Ascending aorta (tissue), 2 donors: ENCODE measurements at regions of chr12 and their contacts with region 1.

Region 1: GRCh38 chr12:12327802-12328201 is 22.2 kb downstream of the MANSC1 start:
- DNase-seq: no peak
- H3K4me3 ChIP-seq: no peak overlapping the region
- H3K27ac ChIP-seq: peak overlapping the region in 1 of 2 donors; percentile 44
- H3K4me1 ChIP-seq: peaks cover 0 to 4% of the 10 kb centered on the region in 2 donors
- H3K27me3 ChIP-seq: no peaks in the 10 kb centered on the region
- CTCF ChIP-seq: peak; percentile 46 to 73 (median 64)

Region 2: GRCh38 chr12:12081836-12082497 is 245.8 kb before region 1 on chr12:
- intact Hi-C with region 1: loop called (anchors 1 kb)
- DNase-seq: no peak
- H3K4me3 ChIP-seq: no peak overlapping the region
- H3K27ac ChIP-seq: peak overlapping the region; percentile 64 to 74
- H3K4me1 ChIP-seq: no peaks in the 10 kb centered on the region
- H3K27me3 ChIP-seq: no peaks in the 10 kb centered on the region
- CTCF ChIP-seq: peak in 2 of 3 experiments; percentile 26 to 52

Region 3: GRCh38 chr12:12171991-12172521 is 155.7 kb before region 1 on chr12:
- intact Hi-C with region 1: loop called (anchors 10 kb)
- DNase-seq: no peak
- H3K4me3 ChIP-seq: no peak overlapping the region
- H3K27ac ChIP-seq: peak overlapping the region in 1 of 2 donors; percentile 2
- H3K4me1 ChIP-seq: peaks cover 0 to 4% of the 10 kb centered on the region in 2 donors
- H3K27me3 ChIP-seq: no peaks in the 10 kb centered on the region
- CTCF ChIP-seq: no peak